Uterus (tissue), 4 donors: ENCODE measurements at regions of chr5 and their contacts with region 1.

Region 1: DNA sequence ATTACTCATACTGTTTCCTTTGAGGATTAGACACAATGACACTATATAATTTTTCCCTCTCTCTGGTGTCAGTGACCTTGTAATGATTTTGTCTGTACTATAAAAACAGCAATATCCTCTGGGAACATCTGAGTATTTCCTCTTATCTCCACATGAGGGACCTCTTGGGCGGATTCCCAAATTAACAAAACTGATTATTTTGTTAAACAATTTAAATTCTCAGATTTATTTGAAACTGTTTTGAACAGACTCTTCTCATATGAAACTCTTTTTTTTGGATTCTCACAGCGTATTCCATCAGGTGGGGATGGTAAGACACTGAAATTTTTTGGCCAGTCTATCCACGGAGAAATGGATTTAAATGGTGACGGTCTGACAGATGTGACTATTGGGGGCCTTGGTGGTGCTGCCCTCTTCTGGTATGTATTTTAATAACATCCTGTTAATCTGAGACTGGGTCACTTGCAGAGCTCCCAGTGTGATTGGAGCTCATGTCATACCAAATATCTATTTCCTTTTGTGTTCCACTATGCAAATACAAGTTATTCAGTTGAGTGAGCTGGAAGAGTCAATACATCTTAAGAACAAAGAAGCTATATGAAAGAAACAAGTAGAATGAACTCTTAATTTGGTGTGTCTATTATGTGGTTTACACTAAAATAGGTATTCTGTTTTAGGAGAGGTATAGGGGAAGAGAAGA is 73.8 kb upstream of the ITGA2 start:
- DNase-seq: peak; percentile 24 to 59
- H3K4me3 ChIP-seq: peak overlapping the region; percentile 13 to 29
- H3K27ac ChIP-seq: peak overlapping the region; percentile 33 to 63
- H3K4me1 ChIP-seq: peaks cover 0 to 9% of the 10 kb centered on the region in 2 donors
- H3K27me3 ChIP-seq: no peaks in the 10 kb centered on the region
- CTCF ChIP-seq: peak; percentile 69 to 92 (median 75)
- POLR2A ChIP-seq: no peak

Region 2: GRCh38 chr5:52787600-52788504 is 127.5 kb before region 1 on chr5 and contains the starts of genes ITGA1 and PELO:
- intact Hi-C with region 1: loop called (anchors 5 kb)
- DNase-seq: peak; percentile 84 to 85
- H3K4me3 ChIP-seq: peak within 1 kb of the TSS; percentile 51 to 59
- H3K27ac ChIP-seq: peak within 1 kb of the TSS; percentile 96
- H3K4me1 ChIP-seq: no peaks in the 10 kb centered on the region
- H3K27me3 ChIP-seq: no peaks in the 10 kb centered on the region
- CTCF ChIP-seq: peak; percentile 49 to 71 (median 65)
- POLR2A ChIP-seq: peak; percentile 49 to 60
- total RNA-seq, gene ITGA1: 41.8 to 94.0 (median 69.6) TPM
- total RNA-seq, gene PELO: 16.5 to 35.8 (median 24.6) TPM